Right ventricle myocardium inferior (tissue), 1 donor: ENCODE measurements at regions of chr1 and their contacts with region 1.

Region 1: DNA sequence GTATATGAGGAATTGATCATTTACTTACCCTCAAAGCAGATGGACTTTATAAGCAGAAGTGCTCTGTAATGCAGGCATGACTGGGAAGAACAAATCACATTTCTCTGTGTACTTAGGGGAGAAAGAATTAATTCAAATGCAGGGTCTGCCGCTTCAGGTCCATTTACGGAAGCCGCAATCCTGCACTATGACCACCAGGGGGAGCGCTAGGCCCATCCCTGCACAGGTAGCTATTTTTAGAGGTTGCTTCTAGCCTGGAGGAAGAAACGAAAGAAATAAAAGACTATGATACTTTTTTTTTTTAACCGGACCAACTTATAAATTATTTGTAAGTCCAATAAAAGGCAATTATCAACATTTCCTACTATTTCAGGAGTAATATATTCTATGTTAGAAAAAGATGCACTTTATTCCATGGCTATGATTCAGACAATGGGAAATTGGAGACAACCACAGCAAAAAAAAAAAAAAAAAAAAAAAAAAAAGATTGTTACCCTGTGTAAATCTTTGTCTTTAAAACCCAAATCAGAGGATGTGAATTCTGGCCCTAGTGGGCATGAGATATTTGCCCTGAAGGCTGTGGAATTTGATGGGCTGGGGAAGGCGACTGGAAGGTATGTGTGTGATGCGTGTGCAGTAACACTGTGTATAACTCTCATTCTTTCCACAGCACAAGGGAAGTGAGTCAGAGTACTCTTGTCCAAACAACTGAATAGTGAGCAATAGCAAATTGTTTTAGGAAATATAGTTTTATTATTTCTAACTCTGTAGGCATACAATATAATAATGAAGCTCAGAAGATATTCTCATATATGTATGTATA is 12.9 kb upstream of the FYB2 start:
- DNase-seq: peak; percentile 68
- ATAC-seq: peak; percentile 81

Region 2: DNA sequence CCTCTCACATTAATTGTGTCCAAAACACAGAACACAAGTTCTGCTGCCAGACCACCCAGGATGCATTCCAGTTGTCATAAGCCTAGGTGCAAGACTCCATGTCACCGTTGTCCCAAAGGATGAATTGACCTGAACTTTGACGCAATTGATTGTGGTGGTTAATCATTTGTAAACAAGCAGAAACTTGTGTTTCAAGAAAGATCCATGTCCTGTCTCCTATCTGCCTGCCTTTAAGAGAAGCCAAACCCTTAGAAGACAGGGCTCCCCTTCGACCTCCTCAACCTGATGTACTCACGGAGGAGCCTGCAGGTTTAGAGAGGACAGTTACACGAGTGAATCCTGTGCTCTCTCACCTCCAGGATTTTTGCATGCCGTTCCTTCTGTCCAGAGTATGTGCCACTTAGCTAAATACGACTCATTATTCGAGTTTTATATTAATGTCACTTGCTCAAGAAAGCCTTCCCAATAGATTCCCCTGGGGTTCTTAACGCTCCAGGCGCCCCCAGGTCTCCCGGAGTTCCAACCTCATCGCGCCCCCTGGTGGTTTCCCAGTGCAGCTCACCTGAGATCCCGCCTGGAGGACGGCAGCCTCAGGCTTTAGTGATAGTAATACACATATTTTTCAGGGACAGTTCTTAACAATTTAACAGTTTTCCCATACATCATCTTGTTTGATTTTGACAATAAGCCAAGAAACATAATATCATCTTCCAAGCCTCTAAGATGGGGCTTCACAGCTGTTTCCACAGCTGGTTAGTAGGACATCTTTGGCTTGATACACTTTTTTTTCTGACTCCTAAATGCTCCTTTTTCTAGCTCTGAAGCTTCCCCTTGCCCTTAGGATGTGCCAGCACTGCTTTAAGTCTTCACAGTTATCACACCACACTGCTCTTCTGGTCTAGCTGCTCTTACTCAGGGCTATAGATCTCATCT is 136.1 kb after region 1 on chr1:
- intact Hi-C with region 1: loop called (anchors 10 kb)
- DNase-seq: no peak
- ATAC-seq: no peak

Region 3: DNA sequence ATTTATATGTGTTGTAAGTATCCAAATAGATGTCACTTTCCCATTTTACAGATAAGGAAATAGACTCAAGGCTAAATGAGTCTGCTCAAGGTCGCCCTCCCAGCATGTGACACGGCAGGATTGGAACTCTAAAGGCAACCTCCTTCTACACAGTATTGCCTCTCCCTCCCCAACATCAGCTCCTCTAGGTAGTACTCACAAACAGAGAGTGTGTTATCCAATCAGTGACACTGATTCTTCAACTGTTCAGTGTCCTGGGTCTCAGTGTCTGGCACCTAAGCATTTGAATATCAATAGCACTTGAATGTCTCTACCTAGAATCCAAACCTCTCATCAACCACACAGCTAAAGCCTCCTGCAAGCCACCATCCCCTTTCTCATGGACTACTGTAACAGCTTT is 504.7 kb after region 1 on chr1:
- intact Hi-C with region 1: loop called (anchors 5 kb)
- DNase-seq: no peak
- ATAC-seq: no peak

Region 4: GRCh38 chr1:58047265-58047858 is 1215.3 kb after region 1 on chr1:
- intact Hi-C with region 1: loop called (anchors 10 kb)
- DNase-seq: no peak
- ATAC-seq: no peak

Region 5: DNA sequence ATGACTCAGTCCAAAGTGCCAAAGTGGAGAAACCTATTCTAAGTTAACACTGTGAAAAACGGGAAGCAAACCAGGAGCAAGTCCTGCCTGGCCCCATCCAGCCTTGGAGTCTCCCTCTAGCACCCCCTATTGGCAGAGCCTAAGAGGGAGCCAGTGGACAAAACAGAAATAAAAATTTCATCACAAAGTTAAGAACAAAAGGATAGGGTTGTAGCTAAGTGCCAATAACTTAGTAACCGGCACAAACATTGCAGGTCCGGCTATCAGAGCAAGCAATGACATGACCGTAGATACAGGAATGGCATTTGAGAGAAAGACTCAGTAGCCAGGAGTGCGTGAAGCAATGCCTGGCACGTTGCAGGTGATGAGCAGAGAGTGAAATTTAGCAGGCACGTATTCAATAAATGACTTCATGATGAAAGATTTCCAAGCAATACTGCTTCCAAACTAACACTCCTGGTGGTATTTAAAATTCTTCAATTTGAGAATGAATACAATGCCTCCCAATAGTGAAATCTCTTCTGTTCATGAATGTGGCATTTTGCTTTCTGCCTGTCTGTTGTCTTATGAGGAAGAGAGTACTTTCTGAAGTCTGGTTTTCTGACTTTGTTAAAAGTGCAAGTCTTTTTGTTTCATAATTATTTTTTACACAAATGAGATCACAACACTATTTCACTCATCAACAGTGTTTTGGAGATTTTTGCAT is 1323.5 kb after region 1 on chr1:
- intact Hi-C with region 1: loop called (anchors 10 kb)
- DNase-seq: peak; percentile 63
- ATAC-seq: peak; percentile 89